WTC11 (cell line): ENCODE measurements at regions of chr17 and their contacts with region 1.

Region 1: GRCh38 chr17:39579318-39580081 is 28.2 kb downstream of the NEUROD2 start:
- DNase-seq: peak; percentile 69
- ATAC-seq: peak; percentile 91
- H3K4me3 Mint-ChIP-seq: peak overlapping the region; percentile 29
- H3K27ac Mint-ChIP-seq: peak overlapping the region; percentile 46; the same call in 1 of the 2 replicates
- H3K4me1 Mint-ChIP-seq: peaks cover 37% of the 10 kb centered on the region
- H3K27me3 Mint-ChIP-seq: peaks cover 14% of the 10 kb centered on the region
- CTCF ChIP-seq: no peak

Region 2: DNA sequence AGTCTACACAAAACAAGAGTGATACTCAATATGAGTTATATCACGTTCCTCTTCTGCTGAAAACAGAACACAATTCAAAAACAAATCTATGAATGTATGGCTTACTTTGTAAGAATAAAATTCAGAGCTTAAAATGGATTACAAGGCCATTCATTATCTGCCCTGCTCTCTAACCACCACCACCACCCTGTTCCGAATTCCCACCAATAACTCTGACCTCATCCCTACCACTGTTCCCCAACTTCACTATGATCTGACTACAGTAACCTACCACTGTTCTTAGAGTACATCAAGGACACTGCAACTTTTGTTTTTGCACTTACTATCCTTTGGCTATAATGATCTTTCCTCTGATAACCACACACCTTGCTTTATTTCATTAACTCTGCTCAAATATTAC is 199.4 kb before region 1 on chr17:
- CTCF ChIA-PET with region 1: no interaction called
- POLR2A ChIA-PET with region 1: no interaction called
- DNase-seq: no peak
- ATAC-seq: no peak
- H3K4me3 Mint-ChIP-seq: no peak overlapping the region
- H3K27ac Mint-ChIP-seq: no peak overlapping the region
- H3K4me1 Mint-ChIP-seq: peaks cover 8% of the 10 kb centered on the region; the same call in 1 of the 2 replicates
- H3K27me3 Mint-ChIP-seq: no peaks in the 10 kb centered on the region
- CTCF ChIP-seq: no peak

Region 3: DNA sequence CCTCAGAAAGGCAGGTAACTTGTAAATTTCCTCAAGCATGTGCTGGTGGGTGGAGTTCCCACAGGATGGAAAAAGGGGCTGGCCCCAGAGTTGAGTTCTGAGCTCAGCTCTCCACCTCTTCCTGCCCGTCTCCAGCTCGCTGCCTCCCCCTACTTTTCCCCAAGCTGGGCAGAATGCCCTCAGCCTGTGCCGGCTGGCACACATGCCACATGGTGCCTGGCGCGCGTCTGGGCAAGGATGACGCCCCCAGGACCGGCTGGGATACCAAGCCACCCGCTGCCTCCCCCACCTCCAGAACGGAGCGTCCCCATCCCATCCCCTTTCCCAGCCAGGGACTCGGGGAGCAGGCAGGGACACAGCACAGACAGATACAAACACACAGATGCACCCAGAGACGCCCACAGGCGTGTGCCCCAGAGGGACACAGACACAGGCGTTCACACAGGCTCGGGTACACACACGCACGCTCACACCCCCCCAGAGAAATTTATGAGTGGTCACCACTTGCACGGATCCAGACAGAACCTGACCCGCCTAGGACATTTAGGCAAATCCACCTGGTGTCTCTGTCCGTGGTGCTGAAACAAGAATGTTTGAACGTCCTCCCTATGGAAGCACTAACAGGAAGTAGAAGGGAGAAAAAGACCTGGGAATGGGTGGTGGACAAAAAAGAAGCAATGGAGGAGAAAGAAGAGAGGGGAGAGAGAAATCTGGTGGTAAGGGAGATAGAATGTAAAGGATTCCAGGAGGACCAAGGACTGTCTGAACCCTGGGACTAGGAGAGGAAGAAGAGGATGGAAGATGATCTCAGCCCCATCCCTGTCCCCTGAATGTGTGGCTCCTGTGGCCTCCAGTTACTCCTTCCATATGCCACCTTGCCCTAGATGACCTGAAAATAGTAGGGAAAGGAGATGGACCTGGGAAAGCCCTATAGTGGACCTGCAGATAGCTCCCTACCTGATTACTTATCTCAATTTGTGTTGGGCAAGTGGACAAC is 12.8 kb after region 1 on chr17:
- CTCF ChIA-PET with region 1: interaction called, 11 read pairs
- POLR2A ChIA-PET with region 1: no interaction called
- DNase-seq: peak; percentile 84
- ATAC-seq: peak; percentile 69
- H3K4me3 Mint-ChIP-seq: peak overlapping the region; percentile 46
- H3K27ac Mint-ChIP-seq: no peak overlapping the region
- H3K4me1 Mint-ChIP-seq: peaks cover 29% of the 10 kb centered on the region
- H3K27me3 Mint-ChIP-seq: peaks cover 77% of the 10 kb centered on the region
- CTCF ChIP-seq: no peak

Region 4: DNA sequence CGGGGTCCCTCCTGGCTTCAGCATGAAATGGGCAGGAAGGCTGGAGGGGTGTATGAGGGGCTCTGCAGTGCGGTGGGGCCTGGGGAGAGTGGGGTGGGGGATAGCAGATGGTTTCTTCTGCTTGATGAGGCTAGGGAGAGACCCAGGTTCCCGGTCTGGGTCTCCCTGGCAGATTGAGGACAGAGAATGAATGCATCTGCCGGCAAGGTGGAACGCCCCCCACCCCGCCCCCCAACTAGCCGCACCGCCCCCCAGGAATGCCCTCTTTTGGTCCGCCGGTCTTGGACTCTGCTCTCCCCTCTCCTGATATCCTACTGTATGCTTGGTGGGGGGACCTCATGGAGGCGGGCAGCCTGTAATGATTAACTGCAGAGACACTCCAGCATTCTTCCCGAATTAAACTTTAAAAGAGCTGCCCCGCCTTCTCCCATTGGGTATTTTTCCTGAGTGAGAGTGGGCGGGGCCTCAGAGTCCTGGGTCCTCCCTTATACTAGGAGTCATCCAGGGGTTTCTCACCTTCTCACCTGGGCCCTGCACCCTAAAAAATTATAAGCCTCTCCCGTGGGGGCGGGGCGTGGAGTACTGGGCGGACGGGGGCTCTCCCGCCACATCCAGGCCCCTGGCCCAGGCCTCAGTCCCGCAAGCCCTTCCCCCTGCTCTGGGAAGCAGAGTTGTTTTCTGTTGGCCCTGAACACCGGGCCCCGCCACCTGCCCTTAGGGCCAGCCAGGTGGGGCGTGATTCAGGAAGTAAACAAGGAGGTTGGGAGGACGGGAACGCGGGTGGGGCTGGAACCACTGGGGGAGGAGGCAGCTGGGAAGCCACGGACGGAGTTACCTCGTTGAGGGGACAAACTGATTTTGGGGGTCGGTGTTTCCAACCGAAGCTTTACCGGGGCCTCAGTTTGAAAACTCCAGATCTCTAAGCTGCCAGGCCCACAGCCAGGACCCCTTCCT is 159.7 kb after region 1 on chr17:
- CTCF ChIA-PET with region 1: no interaction called
- POLR2A ChIA-PET with region 1: no interaction called
- DNase-seq: peak; percentile 71
- ATAC-seq: peak; percentile 12
- H3K4me3 Mint-ChIP-seq: peak overlapping the region; percentile 91
- H3K27ac Mint-ChIP-seq: peak overlapping the region; percentile 98
- H3K4me1 Mint-ChIP-seq: peaks cover 38% of the 10 kb centered on the region
- H3K27me3 Mint-ChIP-seq: no peaks in the 10 kb centered on the region; the same call in 1 of the 2 replicates
- CTCF ChIP-seq: no peak